Sigmoid colon (tissue), 7 donors: ENCODE measurements at regions of chr10 and their contacts with region 1.

Region 1: GRCh38 chr10:104209575-104210198 is 22.5 kb downstream of the CFAP43 start:
- DNase-seq: no peak
- H3K4me3 ChIP-seq: no peak overlapping the region
- H3K27ac ChIP-seq: no peak overlapping the region
- H3K4me1 ChIP-seq: no peaks in the 10 kb centered on the region
- H3K27me3 ChIP-seq: no peaks in the 10 kb centered on the region
- CTCF ChIP-seq: peak in 3 of 4 experiments; percentile 23 to 45 (median 26)
- EP300 ChIP-seq: no peak
- POLR2A ChIP-seq: no peak

Region 2: DNA sequence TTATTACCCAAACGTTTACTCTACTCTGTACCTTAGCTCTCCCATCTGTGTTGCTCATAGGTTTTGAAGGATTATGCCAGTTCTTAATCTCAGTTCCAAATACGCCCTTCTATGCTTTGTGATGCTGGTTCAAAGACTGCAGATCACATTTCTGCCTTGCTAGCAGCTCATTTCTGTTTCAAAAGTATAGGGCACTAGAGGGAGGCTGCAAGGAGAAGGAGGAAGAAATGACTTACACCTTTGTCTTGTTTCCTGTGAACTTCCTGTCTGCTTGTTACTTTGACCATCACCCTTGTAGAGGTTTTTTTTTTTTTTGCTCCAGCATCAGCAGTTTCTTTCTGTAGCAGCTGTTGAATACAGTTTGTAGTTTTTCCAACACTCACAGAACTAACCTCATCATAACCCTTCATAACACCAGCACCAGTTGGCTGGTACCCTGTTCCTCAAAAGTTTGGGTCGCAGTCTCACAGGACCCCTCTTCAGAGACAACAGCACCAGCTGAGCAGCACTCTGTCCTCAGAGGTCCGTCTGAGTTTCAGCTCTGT is 226.2 kb before region 1 on chr10:
- intact Hi-C with region 1: no loop called
- DNase-seq: no peak
- H3K4me3 ChIP-seq: no peak overlapping the region
- H3K27ac ChIP-seq: no peak overlapping the region
- H3K4me1 ChIP-seq: peaks cover 0 to 75% (median 29%) of the 10 kb centered on the region in 4 donors
- H3K27me3 ChIP-seq: no peaks in the 10 kb centered on the region
- CTCF ChIP-seq: no peak
- EP300 ChIP-seq: no peak
- POLR2A ChIP-seq: no peak

Region 3: GRCh38 chr10:104045151-104046089 is 164.3 kb before region 1 on chr10:
- intact Hi-C with region 1: loop called (anchors 5 kb)
- DNase-seq: no peak
- H3K4me3 ChIP-seq: no peak overlapping the region
- H3K27ac ChIP-seq: no peak overlapping the region
- H3K4me1 ChIP-seq: no peaks in the 10 kb centered on the region
- H3K27me3 ChIP-seq: no peaks in the 10 kb centered on the region
- CTCF ChIP-seq: peak in 2 of 4 experiments; percentile 9 to 40
- EP300 ChIP-seq: no peak
- POLR2A ChIP-seq: no peak

Region 4: DNA sequence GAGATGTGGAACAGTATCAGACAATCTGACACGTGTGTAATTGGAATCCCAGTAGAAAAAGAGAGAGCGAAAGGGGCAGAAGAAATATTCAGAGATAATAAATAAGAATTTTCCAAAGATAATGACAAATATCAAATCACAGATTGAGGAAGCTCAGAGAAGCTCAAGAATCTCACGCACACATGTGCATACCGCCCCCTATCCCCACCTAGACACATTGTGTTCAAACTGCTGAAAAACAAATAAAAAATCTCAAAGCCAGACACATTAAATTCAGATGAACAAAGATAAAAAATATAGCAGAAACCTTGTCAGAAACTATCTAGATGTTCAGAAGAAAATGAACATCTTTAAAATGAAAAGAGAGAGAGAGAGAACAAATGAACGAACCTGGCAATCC is 70.5 kb before region 1 on chr10:
- intact Hi-C with region 1: no loop called
- DNase-seq: no peak
- H3K4me3 ChIP-seq: no peak overlapping the region
- H3K27ac ChIP-seq: no peak overlapping the region
- H3K4me1 ChIP-seq: no peaks in the 10 kb centered on the region
- H3K27me3 ChIP-seq: no peaks in the 10 kb centered on the region
- CTCF ChIP-seq: no peak
- EP300 ChIP-seq: no peak
- POLR2A ChIP-seq: no peak